SK-N-SH (cell line): ENCODE measurements at regions of chr16 and their contacts with region 1.

Region 1: DNA sequence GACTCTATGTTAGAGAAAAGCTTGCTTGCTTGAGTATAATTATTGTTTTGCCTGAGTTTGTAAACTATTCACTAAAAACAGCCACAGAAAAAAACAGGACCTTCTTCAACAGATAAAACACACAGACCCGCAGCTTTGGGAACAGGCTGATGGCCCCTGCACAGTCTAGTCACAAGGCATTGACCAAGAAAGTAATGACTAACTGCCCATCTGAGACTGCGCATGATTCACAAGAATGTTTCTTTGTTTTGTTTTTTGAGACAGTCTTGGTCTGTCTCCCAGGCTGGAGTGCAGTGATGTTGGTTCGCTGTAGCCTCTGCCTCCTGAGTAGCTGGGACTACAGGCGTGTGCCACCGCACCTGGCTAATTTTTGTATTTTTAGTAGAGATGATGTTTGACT is 2.8 kb upstream of the ZKSCAN2 start:
- DNase-seq: no peak
- H3K4me3 ChIP-seq: no peak overlapping the region
- H3K27ac ChIP-seq: no peak overlapping the region
- H3K4me1 ChIP-seq: peaks cover 0 to 5% of the 10 kb centered on the region in 2 experiments; a peak in 2 of 4 replicates
- H3K27me3 ChIP-seq: no peaks in the 10 kb centered on the region
- CTCF ChIP-seq: no peak
- EP300 ChIP-seq: no peak
- RAD21 ChIP-seq: no peak

Region 2: DNA sequence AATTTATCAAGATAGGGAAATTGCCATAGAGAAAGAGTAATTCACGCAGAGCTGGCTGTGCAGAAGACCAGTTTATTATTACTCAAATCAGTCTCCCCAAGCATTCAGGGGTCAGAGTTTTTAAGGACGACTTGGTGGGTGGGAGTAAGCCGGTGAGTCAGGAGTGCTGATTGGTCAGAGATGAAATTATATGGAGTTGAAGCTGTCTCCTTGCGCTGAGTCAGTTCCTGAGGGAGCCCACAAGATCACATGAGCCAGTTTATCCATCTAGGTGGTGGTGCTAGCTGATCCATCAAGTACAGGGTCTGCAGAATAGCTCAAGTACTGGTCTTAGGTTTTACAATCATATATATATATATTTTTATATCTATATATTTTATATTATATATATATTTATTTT is 49.7 kb before region 1 on chr16:
- CTCF ChIA-PET with region 1: no interaction called
- POLR2A ChIA-PET with region 1: no interaction called
- DNase-seq: no peak
- H3K4me3 ChIP-seq: no peak overlapping the region
- H3K27ac ChIP-seq: no peak overlapping the region
- H3K4me1 ChIP-seq: no peaks in the 10 kb centered on the region
- H3K27me3 ChIP-seq: no peaks in the 10 kb centered on the region
- CTCF ChIP-seq: no peak
- EP300 ChIP-seq: no peak
- RAD21 ChIP-seq: no peak

Region 3: GRCh38 chr16:25270577-25270976 is 10.2 kb after region 1 on chr16:
- CTCF ChIA-PET with region 1: interaction called, 13 read pairs
- POLR2A ChIA-PET with region 1: interaction called, 4 read pairs
- DNase-seq: no peak
- H3K4me3 ChIP-seq: no peak overlapping the region
- H3K27ac ChIP-seq: no peak overlapping the region
- H3K4me1 ChIP-seq: no peaks in the 10 kb centered on the region
- H3K27me3 ChIP-seq: no peaks in the 10 kb centered on the region
- CTCF ChIP-seq: no peak
- EP300 ChIP-seq: no peak
- RAD21 ChIP-seq: no peak